Caco-2 (cell line): ENCODE measurements at regions of chr6 and their contacts with region 1.

Region 1: GRCh38 chr6:11011787-11012234 is 32.3 kb downstream of the ELOVL2 start:
- DNase-seq: peak; percentile 72 to 73
- H3K4me3 ChIP-seq: no peak overlapping the region
- H3K4me3 Mint-ChIP-seq: peak overlapping the region; percentile 51
- H3K27ac Mint-ChIP-seq: no peak overlapping the region
- H3K4me1 ChIP-seq: peaks cover 58% of the 10 kb centered on the region
- H3K4me1 Mint-ChIP-seq: peaks cover 53% of the 10 kb centered on the region
- H3K27me3 ChIP-seq: no peaks in the 10 kb centered on the region
- H3K27me3 Mint-ChIP-seq: no peaks in the 10 kb centered on the region
- CTCF ChIP-seq: peak in 1 of 2 experiments; percentile 47

Region 2: DNA sequence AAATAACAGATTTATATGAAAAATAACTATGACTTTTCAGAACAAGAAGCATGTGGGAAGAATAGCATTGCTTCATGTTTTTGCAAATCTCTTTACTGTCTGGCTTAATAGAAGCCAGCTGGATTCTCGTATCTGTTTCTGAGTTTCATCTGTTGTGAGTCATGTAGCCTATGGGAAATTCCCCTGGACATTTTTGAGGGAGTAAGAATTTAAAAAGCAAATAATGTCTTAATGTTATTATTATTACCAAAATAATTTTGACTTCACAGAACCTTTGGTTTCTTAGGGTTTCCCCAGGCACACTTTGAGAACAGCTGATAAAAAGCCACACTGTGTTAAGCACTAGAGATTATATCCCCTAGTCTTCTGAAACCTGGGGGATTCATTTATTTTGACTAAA is 49.1 kb before region 1 on chr6:
- CTCF ChIA-PET with region 1: no interaction called
- POLR2A ChIA-PET with region 1: no interaction called
- intact Hi-C with region 1: loop called (anchors 2 kb)
- DNase-seq: no peak
- H3K4me3 ChIP-seq: no peak overlapping the region
- H3K4me3 Mint-ChIP-seq: no peak overlapping the region
- H3K27ac Mint-ChIP-seq: no peak overlapping the region
- H3K4me1 ChIP-seq: no peaks in the 10 kb centered on the region
- H3K4me1 Mint-ChIP-seq: peaks cover 7% of the 10 kb centered on the region
- H3K27me3 ChIP-seq: no peaks in the 10 kb centered on the region
- H3K27me3 Mint-ChIP-seq: no peaks in the 10 kb centered on the region
- CTCF ChIP-seq: no peak

Region 3: DNA sequence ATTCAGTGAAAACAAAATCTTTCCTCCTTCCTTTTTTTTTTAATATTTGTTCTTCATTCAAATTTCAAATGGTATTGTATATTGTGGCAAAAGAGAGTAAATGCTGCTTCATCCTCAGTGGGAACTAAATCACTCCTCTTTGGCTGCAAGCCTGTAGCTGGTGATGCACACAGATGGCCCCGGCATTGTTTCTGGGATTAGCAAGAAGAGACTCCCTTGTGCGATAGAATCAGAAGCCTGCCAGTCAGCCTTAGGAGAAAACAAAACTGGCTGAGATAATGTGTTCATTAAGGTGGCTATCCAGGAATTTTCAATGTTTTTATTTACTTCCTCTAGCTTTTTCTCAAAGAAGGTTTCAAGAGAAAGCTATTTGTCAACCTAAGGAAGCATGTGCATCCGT is 53.0 kb after region 1 on chr6:
- CTCF ChIA-PET with region 1: interaction called, 16 read pairs
- POLR2A ChIA-PET with region 1: no interaction called
- intact Hi-C with region 1: loop called (anchors 1 kb)
- DNase-seq: no peak
- H3K4me3 ChIP-seq: no peak overlapping the region
- H3K4me3 Mint-ChIP-seq: no peak overlapping the region
- H3K27ac Mint-ChIP-seq: no peak overlapping the region
- H3K4me1 ChIP-seq: peaks cover 36% of the 10 kb centered on the region
- H3K4me1 Mint-ChIP-seq: peaks cover 32% of the 10 kb centered on the region
- H3K27me3 ChIP-seq: no peaks in the 10 kb centered on the region
- H3K27me3 Mint-ChIP-seq: no peaks in the 10 kb centered on the region
- CTCF ChIP-seq: no peak

Region 4: DNA sequence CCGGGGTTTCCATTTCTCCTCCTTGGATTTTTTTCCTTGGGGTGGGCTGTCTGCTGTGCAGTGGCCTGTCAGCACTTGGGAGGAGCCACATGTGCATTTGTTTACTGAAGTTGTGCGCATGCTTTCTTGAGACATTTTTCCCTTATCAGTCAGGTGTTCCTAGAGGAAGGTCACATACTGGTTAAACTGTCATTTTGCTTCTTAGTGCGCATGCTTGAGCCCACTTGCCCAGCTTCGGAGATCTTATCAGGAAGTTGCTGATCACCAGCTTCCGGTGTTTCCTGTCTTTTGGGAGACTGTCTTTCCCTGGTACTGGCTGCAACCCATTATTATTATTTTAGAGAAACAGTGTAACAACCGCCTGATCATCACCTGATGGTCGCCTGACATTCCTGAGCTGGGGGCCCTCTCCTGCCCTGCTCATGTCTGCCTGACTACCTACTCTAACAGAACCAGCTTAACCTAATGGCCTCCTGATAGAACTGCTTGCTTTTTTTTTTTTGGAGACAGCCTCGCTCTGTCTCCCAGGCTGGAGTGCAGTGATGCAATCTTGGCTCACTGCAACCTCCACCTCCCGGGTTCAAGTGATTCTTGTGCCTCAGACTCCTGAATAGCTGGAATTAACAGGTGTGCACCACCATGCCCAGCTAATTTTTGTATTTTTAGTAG is 100.1 kb after region 1 on chr6:
- CTCF ChIA-PET with region 1: no interaction called
- POLR2A ChIA-PET with region 1: interaction called, 5 read pairs
- intact Hi-C with region 1: loop called (anchors 1 kb)
- DNase-seq: peak; percentile 73 to 80
- H3K4me3 ChIP-seq: no peak overlapping the region; the same call in 1 of the 2 replicates
- H3K4me3 Mint-ChIP-seq: peak overlapping the region; percentile 62
- H3K27ac Mint-ChIP-seq: peak overlapping the region; percentile 16
- H3K4me1 ChIP-seq: peaks cover 20% of the 10 kb centered on the region
- H3K4me1 Mint-ChIP-seq: peaks cover 7% of the 10 kb centered on the region
- H3K27me3 ChIP-seq: no peaks in the 10 kb centered on the region
- H3K27me3 Mint-ChIP-seq: no peaks in the 10 kb centered on the region
- CTCF ChIP-seq: no peak